ENCODE measurements at regions of chr10 and their contacts with region 1.

Region 1: DNA sequence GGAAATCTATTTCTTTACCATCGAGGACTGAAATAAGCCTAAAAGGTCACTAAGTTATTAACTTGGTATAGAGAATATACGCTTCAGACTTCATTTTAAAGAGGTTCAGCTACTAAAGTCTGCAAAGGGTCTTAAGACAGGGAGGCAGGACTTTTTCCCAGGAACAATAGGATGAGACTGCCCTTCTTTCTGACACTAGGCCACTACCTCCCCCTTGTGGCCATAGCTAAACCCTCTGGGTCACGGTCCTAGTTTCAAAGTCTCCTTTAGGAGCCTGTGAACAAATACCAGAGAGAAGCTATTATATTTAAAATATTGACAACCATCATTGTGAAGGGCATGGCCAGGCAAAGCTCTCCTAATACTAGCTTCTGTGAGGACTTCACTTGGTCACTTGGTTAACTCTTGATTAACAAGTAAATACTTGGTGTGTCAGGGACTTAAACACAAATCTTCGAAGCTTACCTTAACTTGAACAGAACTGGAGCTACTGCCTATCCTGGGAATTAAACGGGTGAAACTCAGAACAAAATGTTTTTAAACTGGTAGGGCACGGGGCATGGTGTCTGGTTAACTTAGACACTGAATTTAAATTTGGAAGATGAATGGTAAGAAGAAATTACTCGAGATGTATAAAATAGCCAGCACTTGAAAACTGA is 75.6 kb downstream of the CCDC6 start:
- DNase-seq: no peak
- H3K4me3 ChIP-seq: no peak overlapping the region
- H3K27ac ChIP-seq: no peak overlapping the region
- H3K4me1 ChIP-seq: peaks cover 6 to 80% (median 27%) of the 10 kb centered on the region in 6 donors
- H3K27me3 ChIP-seq: no peaks in the 10 kb centered on the region
- CTCF ChIP-seq: peak in 10 of 11 experiments; percentile 28 to 75 (median 58)
- POLR2A ChIP-seq: no peak

Region 2: DNA sequence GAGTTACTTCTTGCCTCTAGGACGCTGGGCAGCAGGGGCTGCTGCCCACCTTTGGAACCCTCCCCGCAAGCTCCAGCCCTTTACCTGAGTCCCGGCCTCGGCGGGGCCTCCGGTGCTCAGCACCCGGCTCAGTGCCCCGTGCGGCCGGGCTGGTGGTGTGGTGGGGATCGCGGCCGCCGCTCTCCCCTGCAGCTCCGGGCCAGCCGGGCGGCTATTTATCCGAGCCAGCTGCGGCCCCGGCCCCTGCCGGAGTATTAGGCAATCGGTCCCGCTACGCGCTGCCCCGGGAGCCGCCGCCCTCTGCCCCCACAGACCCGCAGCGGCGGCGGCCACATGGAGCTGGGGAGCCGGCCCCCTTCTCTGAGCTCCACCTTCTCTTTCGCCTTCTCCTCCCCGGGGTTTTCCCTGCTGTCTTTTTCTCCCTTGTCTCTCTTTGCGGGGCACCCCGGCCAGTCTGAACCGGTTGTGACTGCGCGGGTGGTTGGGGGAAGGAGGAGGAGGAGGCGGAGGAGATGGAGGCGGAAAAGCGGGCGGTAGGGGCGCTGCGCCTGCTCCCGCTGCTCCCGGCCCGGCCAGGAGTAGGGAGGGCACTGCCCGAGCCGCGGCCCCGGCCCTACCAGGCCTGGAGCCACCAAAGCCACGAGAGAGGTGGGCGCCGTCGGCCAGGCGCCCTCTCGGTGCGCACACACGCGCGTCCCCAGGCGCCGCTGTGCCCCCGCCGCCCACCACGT is 121.2 kb before region 1 on chr10 and contains the start of gene SLC16A9:
- intact Hi-C with region 1: no loop called
- DNase-seq: peak; percentile 84
- H3K4me3 ChIP-seq: peak within 1 kb of the TSS; percentile 50 to 75 (median 59)
- H3K27ac ChIP-seq: peak within 1 kb of the TSS; percentile 42 to 82 (median 78)
- H3K4me1 ChIP-seq: peaks cover 0 to 35% (median 16%) of the 10 kb centered on the region in 6 donors
- H3K27me3 ChIP-seq: peaks cover 0 to 51% (median 16%) of the 10 kb centered on the region in 7 donors
- CTCF ChIP-seq: peak in 5 of 11 experiments; percentile 18 to 59 (median 31)
- POLR2A ChIP-seq: peak in 1 of 3 donors; percentile 31
- total RNA-seq, gene SLC16A9: 15.7 to 58.9 (median 32.3) TPM

Region 3: DNA sequence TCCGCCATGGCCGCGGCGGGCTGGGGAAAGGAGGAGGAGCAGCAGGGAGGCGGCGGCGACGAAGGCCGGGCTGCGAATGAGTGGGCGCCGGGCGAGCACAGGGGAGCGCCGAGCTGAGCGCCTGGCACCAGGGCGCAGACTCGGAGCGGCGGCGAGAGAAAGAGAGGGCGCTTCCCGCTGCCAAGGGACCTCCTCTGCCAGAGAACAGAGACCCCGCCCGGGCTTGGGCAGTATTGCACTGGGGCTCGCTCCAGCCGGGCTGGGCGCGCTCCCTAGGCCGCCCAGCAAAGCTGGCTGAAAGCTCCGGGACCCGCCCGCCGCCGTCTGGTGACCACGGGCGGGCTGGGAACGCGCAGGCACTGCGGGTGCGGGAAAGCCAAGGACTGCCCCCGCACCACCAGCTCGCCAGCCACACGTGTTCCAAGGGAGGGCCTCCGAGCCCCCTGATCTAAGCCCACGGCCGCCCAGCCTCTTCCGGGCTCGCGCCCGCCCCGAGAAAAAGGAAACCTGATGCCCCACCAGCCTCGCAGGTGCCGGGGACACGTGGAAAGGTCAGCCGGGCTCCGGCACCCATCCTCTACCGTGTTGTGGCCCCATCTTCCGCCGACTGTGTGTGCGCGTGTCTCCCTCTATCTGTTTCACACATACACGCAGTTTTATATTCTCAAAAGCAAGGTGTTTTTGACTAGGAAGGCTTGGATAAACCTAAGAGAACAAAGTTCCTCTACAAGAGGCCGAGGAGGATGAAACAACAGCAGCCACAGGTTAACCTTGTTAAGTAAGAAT is 75.9 kb after region 1 on chr10 and contains the start of gene CCDC6:
- intact Hi-C with region 1: loop called (anchors 10 kb)
- DNase-seq: peak; percentile 98
- H3K4me3 ChIP-seq: peak within 1 kb of the TSS; percentile 75 to 96 (median 89)
- H3K27ac ChIP-seq: peak within 1 kb of the TSS; percentile 91 to 96 (median 94)
- H3K4me1 ChIP-seq: peaks cover 23 to 69% (median 54%) of the 10 kb centered on the region in 6 donors
- H3K27me3 ChIP-seq: no peaks in the 10 kb centered on the region
- CTCF ChIP-seq: peak; percentile 84 to 95 (median 92)
- POLR2A ChIP-seq: peak; percentile 91 to 97 (median 94)
- total RNA-seq, gene CCDC6: 29.3 to 55.1 (median 41.3) TPM